ENCODE measurements at regions of chr10 and their contacts with region 1.

Region 1: DNA sequence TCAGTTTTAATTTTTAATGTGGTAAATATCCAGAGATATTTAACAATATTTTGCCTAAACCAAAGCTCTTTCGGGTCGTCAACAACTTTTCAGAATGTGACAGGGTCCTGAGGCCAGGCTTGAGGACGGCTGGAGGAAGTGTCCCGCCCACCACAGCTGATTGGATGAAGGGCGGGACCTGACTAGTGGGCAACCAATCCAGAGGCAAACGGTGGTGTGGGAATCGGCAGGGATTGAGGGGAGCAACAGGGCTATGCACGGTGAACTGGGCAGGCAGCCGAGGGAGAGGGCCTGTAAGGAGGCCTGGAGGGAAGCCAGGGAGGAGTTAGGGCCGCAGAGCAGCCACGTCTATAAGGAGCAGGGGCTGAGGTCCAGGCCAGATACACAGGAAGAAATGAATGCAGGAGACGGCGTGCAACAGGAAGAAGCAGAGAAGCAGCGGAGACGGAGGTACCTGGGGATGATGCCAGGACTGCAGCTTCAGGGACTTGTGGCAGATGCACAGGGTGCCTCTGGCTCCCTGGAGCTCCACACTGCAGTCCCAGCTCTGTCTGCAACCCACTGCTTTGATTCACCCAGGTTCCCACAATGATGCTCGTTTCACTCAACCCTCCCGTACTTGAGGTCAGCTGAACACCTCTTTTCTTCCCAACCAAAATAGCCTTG is 46.1 kb upstream of the ZMIZ1 start:
- DNase-seq: peak; percentile 55 to 78
- ATAC-seq: peak; percentile 57 to 70
- H3K4me3 ChIP-seq: peak overlapping the region; percentile 29 to 48 (median 36)
- H3K27ac ChIP-seq: peak overlapping the region; percentile 89 to 91 (median 90)
- H3K4me1 ChIP-seq: peaks cover 24 to 35% of the 10 kb centered on the region in 2 donors
- H3K27me3 ChIP-seq: no peaks in the 10 kb centered on the region
- CTCF ChIP-seq: no peak
- POLR2A ChIP-seq: peak in 1 of 2 donors; percentile 17

Region 2: GRCh38 chr10:78972947-78973900 is 49.5 kb before region 1 on chr10:
- in situ Hi-C with region 1: no loop called
- intact Hi-C with region 1: loop called (anchors 2 kb)
- DNase-seq: peak; percentile 84 to 91
- ATAC-seq: peak; percentile 77 to 80
- H3K4me3 ChIP-seq: peak overlapping the region; percentile 40 to 72 (median 58)
- H3K27ac ChIP-seq: peak overlapping the region; percentile 97 to 100 (median 98)
- H3K4me1 ChIP-seq: peaks cover 28 to 30% of the 10 kb centered on the region in 2 donors
- H3K27me3 ChIP-seq: no peaks in the 10 kb centered on the region
- CTCF ChIP-seq: no peak
- POLR2A ChIP-seq: peak; percentile 76 to 83

Measured in gastrocnemius medialis (tissue), 4 donors.